GM18951 (cell line): ENCODE measurements at regions of chrX and their contacts with region 1.

Region 1: GRCh38 chrX:31036895-31037294 is 34.9 kb downstream of the FTHL17 start:
- POLR2A ChIP-seq: no peak

Region 2: GRCh38 chrX:31293409-31293808 is 256.5 kb after region 1 on chrX:
- in situ Hi-C with region 1: loop called (anchors 10 kb)
- POLR2A ChIP-seq: no peak

Region 3: GRCh38 chrX:31658360-31658759 is 621.5 kb after region 1 on chrX:
- in situ Hi-C with region 1: loop called (anchors 10 kb)
- POLR2A ChIP-seq: no peak